ENCODE measurements at regions of chr17 and their contacts with region 1.

Region 1: DNA sequence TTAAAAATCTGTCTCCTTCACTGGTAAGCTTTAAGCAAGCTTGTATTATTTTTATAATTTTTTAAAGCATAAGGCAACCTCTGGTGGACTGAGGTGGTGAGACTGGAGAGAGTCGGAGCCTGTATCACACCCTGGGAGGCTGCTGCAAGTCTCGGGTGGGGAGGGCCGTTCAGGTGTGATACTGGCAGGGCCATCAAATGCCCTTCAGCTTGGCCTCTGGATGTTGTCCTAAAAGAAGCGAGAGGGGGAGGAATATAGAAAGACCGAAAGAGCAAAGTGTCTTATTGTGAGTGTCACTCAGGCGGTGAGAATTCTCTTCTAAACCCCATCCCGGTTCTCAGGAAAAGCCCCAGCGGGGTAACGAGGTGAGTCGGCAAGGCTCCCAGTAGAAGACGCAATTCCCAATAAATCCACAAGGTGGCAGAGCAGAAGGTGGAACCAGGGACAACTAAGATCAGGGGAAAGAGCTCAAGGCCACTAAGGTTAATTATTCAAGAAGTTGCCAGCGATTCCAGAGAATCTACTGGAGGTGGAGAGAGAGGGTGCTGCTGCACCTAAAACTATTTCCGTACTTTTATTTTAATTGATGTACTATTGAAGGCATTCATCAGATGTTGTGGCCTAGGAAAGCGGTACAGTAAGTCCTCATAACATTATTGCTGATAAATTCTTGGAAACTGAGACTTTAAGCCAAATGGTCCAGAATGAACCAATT is 14.1 kb downstream of the C17orf67 start:
- DNase-seq: peak; percentile 53
- ATAC-seq: peak; percentile 96
- H3K4me3 ChIP-seq: no peak overlapping the region
- H3K27ac ChIP-seq: no peak overlapping the region
- H3K4me1 ChIP-seq: no peaks in the 10 kb centered on the region; the same call in 1 of the 2 replicates
- H3K27me3 ChIP-seq: no peaks in the 10 kb centered on the region
- CTCF ChIP-seq: peak; percentile 76 to 85 (median 81)
- EP300 ChIP-seq: no peak
- POLR2A ChIP-seq: no peak
- RAD21 ChIP-seq: peak; percentile 81

Region 2: GRCh38 chr17:56833809-56834379 is 14.3 kb after region 1 on chr17 and contains the starts of genes C17orf67 and DGKE:
- CTCF ChIA-PET with region 1: interaction called, 14 read pairs
- POLR2A ChIA-PET with region 1: no interaction called
- RAD21 ChIA-PET with region 1: interaction called, 8 read pairs
- SMC1A ChIA-PET with region 1: interaction called, 10 read pairs
- in situ Hi-C with region 1: no loop called
- intact Hi-C with region 1: no loop called
- DNase-seq: peak; percentile 72
- ATAC-seq: peak; percentile 86
- H3K4me3 ChIP-seq: peak within 1 kb of the TSS; percentile 79
- H3K27ac ChIP-seq: peak within 1 kb of the TSS; percentile 74
- H3K4me1 ChIP-seq: peaks cover 27% of the 10 kb centered on the region
- H3K27me3 ChIP-seq: no peaks in the 10 kb centered on the region
- CTCF ChIP-seq: no peak
- EP300 ChIP-seq: no peak
- POLR2A ChIP-seq: peak; percentile 78
- RAD21 ChIP-seq: no peak
- polyA plus RNA-seq, gene C17orf67: 0.24 to 0.79 TPM
- polyA plus RNA-seq, gene DGKE: 2.8 to 4.1 TPM

Region 3: DNA sequence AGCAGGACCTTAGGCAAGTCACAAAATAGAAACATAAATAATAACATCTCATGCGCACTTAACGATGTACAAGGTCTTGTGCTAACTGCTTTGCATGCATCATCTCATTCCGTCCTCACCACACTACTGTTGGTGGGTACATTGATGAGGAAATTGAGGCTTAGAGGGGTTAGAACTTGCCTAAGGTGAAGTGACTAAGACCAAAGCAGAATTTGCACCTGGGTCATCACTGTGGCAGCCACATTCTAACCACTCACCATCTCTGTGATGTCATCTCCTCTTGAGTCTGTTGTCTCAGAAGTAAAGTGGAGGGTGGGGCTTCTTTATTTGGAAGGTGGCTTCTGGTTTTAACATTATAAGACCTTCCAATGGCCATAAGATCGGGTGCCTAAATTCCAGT is 114.7 kb after region 1 on chr17:
- CTCF ChIA-PET with region 1: interaction called, 184 read pairs
- POLR2A ChIA-PET with region 1: no interaction called
- RAD21 ChIA-PET with region 1: interaction called, 22 read pairs
- SMC1A ChIA-PET with region 1: interaction called, 26 read pairs
- in situ Hi-C with region 1: loop called (anchors 5 kb)
- intact Hi-C with region 1: no loop called
- DNase-seq: no peak
- ATAC-seq: no peak
- H3K4me3 ChIP-seq: no peak overlapping the region
- H3K27ac ChIP-seq: no peak overlapping the region
- H3K4me1 ChIP-seq: no peaks in the 10 kb centered on the region
- H3K27me3 ChIP-seq: no peaks in the 10 kb centered on the region
- CTCF ChIP-seq: no peak
- EP300 ChIP-seq: no peak
- POLR2A ChIP-seq: no peak
- RAD21 ChIP-seq: no peak

Region 4: GRCh38 chr17:56948491-56948890 is 128.9 kb after region 1 on chr17:
- CTCF ChIA-PET with region 1: interaction called, 184 read pairs
- POLR2A ChIA-PET with region 1: interaction called, 3 read pairs
- RAD21 ChIA-PET with region 1: interaction called, 4 read pairs
- SMC1A ChIA-PET with region 1: interaction called, 27 read pairs
- in situ Hi-C with region 1: no loop called
- intact Hi-C with region 1: no loop called
- DNase-seq: no peak
- ATAC-seq: no peak
- H3K4me3 ChIP-seq: no peak overlapping the region
- H3K27ac ChIP-seq: no peak overlapping the region
- H3K4me1 ChIP-seq: no peaks in the 10 kb centered on the region
- H3K27me3 ChIP-seq: no peaks in the 10 kb centered on the region
- CTCF ChIP-seq: no peak
- EP300 ChIP-seq: no peak
- POLR2A ChIP-seq: no peak
- RAD21 ChIP-seq: no peak

Region 5: DNA sequence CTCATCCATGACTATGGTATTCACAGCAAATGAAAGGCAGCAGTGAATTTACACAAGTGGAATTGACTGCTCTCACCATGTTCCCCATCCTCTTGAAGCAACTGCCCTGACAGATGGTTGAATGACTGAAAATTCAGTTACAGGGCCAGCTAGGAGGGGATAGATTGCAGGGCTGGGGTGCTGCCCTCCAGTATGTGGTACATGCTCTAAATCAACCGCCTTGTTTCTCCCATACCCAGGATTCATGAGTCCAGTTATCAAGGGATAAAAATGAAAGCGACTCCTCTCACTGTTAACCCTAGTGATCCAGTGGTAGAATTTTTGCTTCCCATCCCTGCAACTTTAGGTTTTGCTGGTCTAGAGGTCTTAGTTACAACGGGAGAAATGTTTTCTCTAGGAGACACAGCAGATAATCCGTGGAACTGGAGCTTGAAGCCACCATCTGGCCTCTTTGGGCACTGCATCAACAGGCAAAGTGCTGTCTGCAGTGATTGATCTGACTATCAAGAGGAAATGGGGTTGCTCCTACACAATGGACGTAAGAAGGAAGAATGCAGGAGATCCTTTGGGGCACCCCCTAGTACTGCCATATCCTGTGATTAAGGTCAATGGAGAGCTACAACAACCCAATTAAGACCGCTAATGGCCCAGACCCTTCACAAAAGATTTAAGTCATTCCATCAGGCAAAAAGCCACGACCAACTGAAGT is 190.3 kb after region 1 on chr17:
- CTCF ChIA-PET with region 1: interaction called, 33 read pairs
- POLR2A ChIA-PET with region 1: no interaction called
- RAD21 ChIA-PET with region 1: interaction called, 5 read pairs
- SMC1A ChIA-PET with region 1: interaction called, 8 read pairs
- in situ Hi-C with region 1: no loop called
- intact Hi-C with region 1: no loop called
- DNase-seq: peak; percentile 51
- ATAC-seq: peak; percentile 89
- H3K4me3 ChIP-seq: no peak overlapping the region
- H3K27ac ChIP-seq: no peak overlapping the region
- H3K4me1 ChIP-seq: peaks cover 11% of the 10 kb centered on the region
- H3K27me3 ChIP-seq: no peaks in the 10 kb centered on the region
- CTCF ChIP-seq: peak; percentile 79 to 88 (median 80)
- EP300 ChIP-seq: no peak
- POLR2A ChIP-seq: no peak
- RAD21 ChIP-seq: peak; percentile 70